Posterior vena cava (tissue), 2 donors: ENCODE measurements at regions of chr13 and their contacts with region 1.

Region 1: DNA sequence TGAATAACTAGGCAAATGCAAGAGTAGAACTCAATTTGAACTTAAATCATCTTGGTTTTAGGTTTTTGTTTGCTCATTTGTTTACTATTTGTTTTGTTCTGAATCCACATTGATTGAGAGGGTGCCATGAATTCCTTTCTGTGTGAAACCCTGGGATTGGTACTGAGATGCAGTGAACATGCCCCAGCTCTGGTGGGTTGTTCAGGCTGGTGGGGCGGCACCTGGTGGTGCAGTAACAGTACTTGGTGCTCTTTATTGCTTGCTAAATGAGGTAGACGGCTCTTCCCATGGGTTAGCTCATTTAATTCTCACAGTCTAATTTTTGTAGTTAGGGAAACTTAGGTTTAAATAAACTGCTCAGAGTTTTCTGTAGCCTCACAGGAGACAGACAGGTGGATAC is 48.4 kb downstream of the WASF3 start:
- DNase-seq: no peak

Region 2: GRCh38 chr13:24693862-24694471 is 1911.9 kb before region 1 on chr13:
- intact Hi-C with region 1: loop called in 1 of 2 experiments (anchors 5 kb)
- DNase-seq: peak; percentile 6

Region 3: GRCh38 chr13:26653310-26653709 is 47.5 kb after region 1 on chr13:
- intact Hi-C with region 1: no loop called
- DNase-seq: no peak

Region 4: DNA sequence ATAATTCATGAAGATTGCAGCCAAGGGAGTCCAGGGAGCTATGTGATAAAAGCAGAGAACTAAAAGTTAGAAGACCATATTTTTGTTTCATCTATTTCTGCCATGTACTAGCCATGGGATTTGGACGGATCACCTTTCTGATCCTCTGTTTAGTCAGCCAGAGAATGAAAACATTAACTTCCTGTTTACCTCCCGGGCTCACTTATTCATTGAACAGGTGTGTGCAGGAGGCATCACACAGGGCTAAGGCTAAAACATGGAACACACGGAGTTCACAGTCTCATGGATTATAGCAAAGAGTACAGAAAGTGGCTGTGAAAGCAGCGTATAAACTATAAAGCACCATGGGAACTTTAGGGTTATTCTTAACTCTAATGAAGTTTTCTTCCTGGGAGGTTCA is 57.9 kb after region 1 on chr13:
- intact Hi-C with region 1: loop called in 1 of 2 experiments (anchors 2 kb)
- DNase-seq: no peak

Region 5: DNA sequence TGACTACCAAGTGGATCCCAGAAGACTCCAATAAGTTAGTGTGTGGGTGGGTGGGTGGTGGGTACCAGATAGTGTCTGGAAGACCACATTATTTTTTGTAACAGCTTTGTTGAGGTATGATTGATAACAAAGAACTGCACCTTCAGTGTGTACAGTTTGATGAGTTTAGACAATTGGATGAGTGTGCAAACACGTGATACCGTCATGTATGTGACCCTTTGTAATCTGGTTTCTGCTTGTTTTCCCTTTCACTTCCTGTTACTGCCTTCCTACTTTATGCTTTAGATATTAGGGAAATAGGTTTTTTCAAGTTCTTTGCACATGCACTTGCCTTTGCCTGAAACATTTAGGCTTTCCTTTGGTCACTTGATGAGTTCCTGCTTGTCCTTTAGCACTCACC is 654.0 kb after region 1 on chr13:
- intact Hi-C with region 1: no loop called
- DNase-seq: no peak